A549 (cell line): ENCODE measurements at regions of chr1 and their contacts with region 1.

Region 1: GRCh38 chr1:155989242-155990004 is 11.1 kb upstream of the ARHGEF2 start:
- DNase-seq: peak in 1 of 2 experiments; percentile 71
- ATAC-seq: peak; percentile 90 to 96
- H3K4me3 ChIP-seq: no peak overlapping the region
- H3K27ac ChIP-seq: peak overlapping the region; percentile 66 to 77
- H3K4me1 ChIP-seq: peaks cover 9% of the 10 kb centered on the region
- CTCF ChIP-seq: peak; percentile 96
- EP300 ChIP-seq: no peak
- POLR2A ChIP-seq: no peak
- RAD21 ChIP-seq: peak; percentile 98 to 99

Region 2: GRCh38 chr1:155934097-155934935 is 55.1 kb before region 1 on chr1 and contains the start of gene KHDC4:
- CTCF ChIA-PET with region 1: interaction called, 423 read pairs
- POLR2A ChIA-PET with region 1: interaction called, 4 read pairs
- DNase-seq: peak; percentile 97 to 99
- ATAC-seq: peak; percentile 94 to 97
- H3K4me3 ChIP-seq: peak within 1 kb of the TSS; percentile 81
- H3K27ac ChIP-seq: peak within 1 kb of the TSS; percentile 91 to 94
- H3K4me1 ChIP-seq: peaks cover 42% of the 10 kb centered on the region
- CTCF ChIP-seq: no peak
- EP300 ChIP-seq: no peak
- POLR2A ChIP-seq: peak; percentile 94
- RAD21 ChIP-seq: no peak
- polyA plus RNA-seq, gene KHDC4: 69.9 and 72.3 TPM in 2 replicates

Region 3: DNA sequence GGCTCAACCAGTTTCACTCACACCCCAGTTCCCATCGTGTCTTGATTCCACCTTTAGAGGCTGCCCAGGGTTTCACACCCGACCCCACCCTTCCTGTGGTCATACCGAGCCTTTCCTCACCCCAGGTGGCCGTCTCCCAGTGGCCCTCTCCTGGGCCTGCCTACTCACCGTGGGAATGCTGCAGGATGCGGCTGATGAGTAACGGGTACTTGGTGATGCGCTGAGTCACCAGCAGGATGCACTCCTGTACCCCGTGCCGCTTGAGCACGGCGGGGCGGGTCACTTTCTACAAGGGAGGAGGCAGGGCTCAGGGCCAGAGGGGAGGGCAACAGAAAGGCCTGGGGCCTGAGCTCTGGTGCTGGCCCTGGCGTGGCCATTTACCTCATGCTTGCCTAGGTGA is 27.5 kb before region 1 on chr1:
- CTCF ChIA-PET with region 1: interaction called, 43 read pairs
- POLR2A ChIA-PET with region 1: no interaction called
- DNase-seq: peak; percentile 96 to 98
- ATAC-seq: peak; percentile 97 to 99
- H3K4me3 ChIP-seq: peak overlapping the region; percentile 17; the same call in 1 of the 3 replicates
- H3K27ac ChIP-seq: peak overlapping the region; percentile 91 to 95
- H3K4me1 ChIP-seq: peaks cover 39% of the 10 kb centered on the region
- CTCF ChIP-seq: peak; percentile 43
- EP300 ChIP-seq: peak in 1 of 2 experiments; percentile 19; a peak in 1 of 5 replicates
- POLR2A ChIP-seq: no peak
- RAD21 ChIP-seq: peak; percentile 63 to 69; a peak in 4 of 5 replicates

Region 4: DNA sequence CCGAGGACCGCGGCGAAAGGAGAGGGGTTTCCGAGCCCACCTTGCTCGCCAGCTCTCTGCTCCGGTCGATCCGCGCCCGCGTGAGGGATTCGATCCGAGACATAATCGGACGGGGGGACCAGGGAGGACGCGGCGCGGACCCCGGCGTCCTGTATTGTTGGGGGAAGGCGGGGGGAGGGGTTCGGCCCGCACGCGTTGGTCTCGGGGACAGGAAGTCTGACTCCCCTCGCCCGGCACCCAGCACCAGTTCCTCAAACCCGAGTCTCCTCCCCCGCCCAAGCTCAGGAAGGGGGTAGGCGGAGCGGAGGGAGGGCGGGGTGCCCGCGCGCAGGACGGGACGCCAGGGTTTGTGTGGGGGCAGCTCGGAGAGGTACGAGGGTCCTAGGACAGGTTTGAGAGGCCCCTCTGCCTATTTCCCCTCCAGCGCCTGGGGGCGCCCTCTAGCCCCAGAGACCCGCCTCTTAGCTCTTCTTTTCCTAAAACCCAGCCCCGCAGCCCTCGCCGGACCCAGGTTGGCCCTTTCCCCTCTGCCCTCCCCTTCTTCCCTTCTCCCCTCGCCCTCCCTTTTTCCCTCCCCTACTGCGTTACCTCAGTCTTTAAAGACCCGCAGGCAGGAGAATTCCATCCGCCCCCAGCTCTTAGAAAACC is 11.0 kb before region 1 on chr1 and contains the start of gene ARHGEF2:
- CTCF ChIA-PET with region 1: interaction called, 75 read pairs
- POLR2A ChIA-PET with region 1: interaction called, 3 read pairs
- DNase-seq: peak; percentile 80 to 89
- ATAC-seq: peak; percentile 64 to 85
- H3K4me3 ChIP-seq: peak within 1 kb of the TSS; percentile 90
- H3K27ac ChIP-seq: peak within 1 kb of the TSS; percentile 98 to 99
- H3K4me1 ChIP-seq: peaks cover 76% of the 10 kb centered on the region
- CTCF ChIP-seq: peak; percentile 23; the same call in 2 of the 3 replicates
- EP300 ChIP-seq: no peak
- POLR2A ChIP-seq: peak; percentile 69
- RAD21 ChIP-seq: no peak
- polyA plus RNA-seq, gene ARHGEF2: 67.4 and 69.1 TPM in 2 replicates

Region 5: GRCh38 chr1:156193488-156194299 is 204.3 kb after region 1 on chr1 and contains the start of gene SLC25A44:
- CTCF ChIA-PET with region 1: no interaction called
- POLR2A ChIA-PET with region 1: no interaction called
- DNase-seq: peak; percentile 95 to 99
- ATAC-seq: peak; percentile 98
- H3K4me3 ChIP-seq: peak within 1 kb of the TSS; percentile 84
- H3K27ac ChIP-seq: peak within 1 kb of the TSS; percentile 88 to 89
- H3K4me1 ChIP-seq: 0 out of 3 replicates have a peak, but pooled peaks cover 9% of the 10 kb centered on the region
- CTCF ChIP-seq: no peak
- EP300 ChIP-seq: no peak
- POLR2A ChIP-seq: peak; percentile 83
- RAD21 ChIP-seq: no peak; a peak in 1 of 5 replicates
- polyA plus RNA-seq, gene SLC25A44: 30.7 and 38.8 TPM in 2 replicates

Region 6: DNA sequence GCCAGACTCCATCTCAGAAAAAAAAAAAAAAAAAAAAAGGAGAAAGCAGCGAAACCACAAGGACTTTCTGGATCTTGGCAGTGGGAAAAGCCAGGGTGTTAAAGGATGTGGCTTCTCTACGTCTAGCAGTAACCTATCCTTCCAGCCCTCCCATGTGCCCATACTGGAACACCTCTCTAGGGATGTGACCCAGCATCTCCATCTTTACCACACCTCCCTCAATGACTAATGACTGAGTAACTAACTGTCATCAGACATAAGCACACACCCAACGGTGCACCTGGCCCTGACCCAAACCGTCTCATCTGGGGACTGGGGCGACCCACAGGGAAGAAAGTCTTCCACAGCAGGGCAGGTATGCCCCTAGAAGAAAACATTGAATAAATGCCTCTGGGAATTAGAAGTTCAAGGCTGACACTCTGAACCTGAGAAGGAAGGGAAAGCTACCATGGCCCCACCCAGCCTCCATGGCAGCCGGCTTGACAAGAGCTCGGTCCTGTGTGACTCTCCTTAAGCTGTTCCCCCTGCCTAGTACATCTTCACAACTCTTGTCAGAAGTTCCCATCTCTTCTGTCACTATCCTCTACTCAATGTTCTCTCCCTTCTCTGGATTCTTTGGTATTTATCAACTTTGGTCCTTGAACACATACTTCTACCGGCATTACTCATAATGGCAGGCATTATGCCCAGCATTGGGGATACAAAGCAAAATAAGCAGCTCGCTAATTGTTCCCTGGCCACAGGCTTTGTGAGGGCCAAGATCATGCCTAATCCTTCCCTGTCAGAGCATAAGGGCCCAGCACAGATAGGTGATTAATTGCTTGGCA is 273.3 kb after region 1 on chr1:
- CTCF ChIA-PET with region 1: no interaction called
- POLR2A ChIA-PET with region 1: no interaction called
- DNase-seq: peak in 1 of 2 experiments; percentile 68
- ATAC-seq: peak; percentile 31 to 56; a peak in 4 of 6 replicates
- H3K4me3 ChIP-seq: no peak overlapping the region
- H3K27ac ChIP-seq: no peak overlapping the region
- H3K4me1 ChIP-seq: peaks cover 15% of the 10 kb centered on the region
- CTCF ChIP-seq: no peak
- EP300 ChIP-seq: no peak
- POLR2A ChIP-seq: no peak
- RAD21 ChIP-seq: no peak